ENCODE measurements at regions of chr10 and their contacts with region 1.

Region 1: DNA sequence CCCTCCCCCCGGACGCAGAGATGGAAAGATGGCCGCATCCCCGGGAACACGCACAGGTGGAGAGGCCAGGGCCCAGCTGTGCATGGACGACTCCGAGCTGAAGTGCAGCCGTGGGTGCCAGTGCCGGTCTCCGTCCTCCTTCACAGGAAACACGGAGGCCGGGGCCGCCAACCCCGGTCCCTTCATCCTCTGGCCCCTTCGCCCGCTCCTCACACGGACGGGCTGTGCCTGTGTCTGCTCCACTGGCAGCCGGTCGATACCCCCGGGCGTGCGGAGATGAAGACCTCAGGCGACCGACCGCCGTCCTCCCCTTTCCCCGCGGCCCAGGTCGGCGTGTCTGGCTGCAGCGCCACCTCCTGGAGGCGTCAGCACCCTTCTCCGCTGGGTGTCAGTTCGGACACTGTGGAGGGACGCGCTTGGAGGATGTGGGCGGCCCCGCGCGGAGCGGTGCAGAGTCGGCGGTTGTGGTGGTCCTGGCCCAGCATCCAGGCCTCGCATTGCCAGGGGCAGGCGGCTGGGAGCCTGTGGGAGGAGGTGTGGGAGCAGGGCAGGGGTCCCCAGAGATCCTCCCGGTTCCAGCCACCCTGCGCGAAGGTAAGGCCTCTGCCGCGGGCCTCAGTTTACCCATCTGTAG is 9.9 kb downstream of the ZNF511 start:
- DNase-seq: peak; percentile 64
- H3K4me3 Mint-ChIP-seq: peak overlapping the region; percentile 56
- H3K27ac Mint-ChIP-seq: no peak overlapping the region
- H3K4me1 Mint-ChIP-seq: peaks cover 6% of the 10 kb centered on the region
- H3K27me3 Mint-ChIP-seq: peaks cover 9% of the 10 kb centered on the region

Region 2: DNA sequence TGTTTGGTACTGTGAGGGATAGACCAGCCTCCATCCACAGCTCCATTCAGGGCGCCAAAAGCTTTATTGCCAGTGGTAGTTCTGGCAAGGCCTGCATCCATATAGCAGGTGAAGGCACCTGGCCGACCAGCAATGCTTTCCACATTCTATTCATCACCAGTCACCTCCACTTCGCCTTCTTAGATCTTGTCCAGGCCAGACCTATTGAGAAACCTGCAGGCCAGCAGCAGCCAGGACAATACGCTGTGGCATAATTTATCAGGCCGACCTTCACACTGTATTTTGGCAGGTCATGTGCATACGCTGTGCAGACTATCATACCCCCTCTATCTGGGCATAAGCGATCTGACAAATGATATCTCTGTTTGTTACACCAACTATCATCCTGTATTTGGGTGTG is 173.8 kb before region 1 on chr10:
- intact Hi-C with region 1: loop called (anchors 1 kb)
- DNase-seq: no peak
- H3K4me3 Mint-ChIP-seq: no peak overlapping the region
- H3K27ac Mint-ChIP-seq: no peak overlapping the region
- H3K4me1 Mint-ChIP-seq: peaks cover 7% of the 10 kb centered on the region
- H3K27me3 Mint-ChIP-seq: peaks cover 23% of the 10 kb centered on the region

Measured in activated T-helper 2 cell treated with anti-CD3 and anti-CD28 coated beads, Interferon-gamma antibody, Interleukin-2, Interleukin-4, amounts not matched to agents 10 μg/mL and 5 μg/mL and 100 μg/mL, durations not matched to agents 14 hours and 24 hours and 36 hours (primary cell).